T-cell (primary cell): ENCODE measurements at regions of chr10 and their contacts with region 1.

Region 1: DNA sequence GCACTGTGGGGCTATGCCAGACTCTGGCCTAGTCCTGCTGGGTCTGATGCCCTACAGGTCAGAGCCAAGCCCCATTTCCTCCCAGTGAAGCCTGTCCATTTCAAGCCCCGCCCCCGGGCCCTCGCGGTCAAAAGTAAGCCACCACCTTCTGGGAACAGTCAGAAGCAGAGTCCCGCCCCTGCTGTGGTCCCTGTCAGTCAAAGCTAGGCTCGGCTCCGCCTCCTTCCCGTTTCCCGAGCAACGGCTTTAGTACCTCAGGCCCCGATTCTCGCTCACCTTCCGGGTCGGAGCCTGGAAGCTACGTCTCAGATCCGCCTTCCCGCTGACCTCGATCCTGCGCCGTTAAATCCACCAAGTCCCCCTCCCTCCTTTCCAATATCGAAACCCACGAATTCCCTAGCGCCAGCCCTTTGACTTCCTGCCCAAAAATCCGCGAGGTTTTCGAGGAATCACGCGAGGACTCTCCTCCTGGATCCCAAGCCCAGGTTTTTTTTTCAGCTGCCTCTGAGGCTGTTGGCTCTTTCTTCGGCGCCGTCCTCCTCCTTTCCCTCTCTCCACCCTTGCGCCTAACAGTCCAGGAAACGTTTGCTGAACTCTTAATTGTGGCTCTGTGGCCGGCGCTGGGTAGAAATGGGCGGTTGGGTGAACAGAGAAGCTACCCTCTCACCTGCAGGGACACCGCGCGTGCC is 11.8 kb downstream of the SFXN3 start:
- DNase-seq: peak; percentile 44 to 85 (median 68)
- ATAC-seq: peak; percentile 80 to 91 (median 86)
- H3K4me3 ChIP-seq: peak overlapping the region; percentile 59 to 83
- H3K4me3 Mint-ChIP-seq: peak overlapping the region; percentile 93 to 94 (median 94)
- H3K27ac ChIP-seq: peak overlapping the region; percentile 36
- H3K27ac Mint-ChIP-seq: peak overlapping the region; percentile 90 to 94
- H3K4me1 ChIP-seq: peaks cover 5 to 22% of the 10 kb centered on the region in 2 experiments
- H3K4me1 Mint-ChIP-seq: peaks cover 23 to 31% (median 26%) of the 10 kb centered on the region in 3 donors
- H3K27me3 ChIP-seq: peaks cover 13 to 22% of the 10 kb centered on the region in 2 experiments
- H3K27me3 Mint-ChIP-seq: peaks cover 17 to 20% of the 10 kb centered on the region in 2 donors

Region 2: GRCh38 chr10:100986952-100987750 is 55.7 kb before region 1 on chr10 and contains the starts of genes MRPL43 and TWNK:
- CTCF ChIA-PET with region 1: interaction called in 1 of 2 experiments, 10 read pairs
- POLR2A ChIA-PET with region 1: no interaction called
- DNase-seq: peak; percentile 67 to 90 (median 82)
- ATAC-seq: peak; percentile 94 to 97 (median 96)
- H3K4me3 ChIP-seq: peak within 1 kb of the TSS; percentile 91 to 92
- H3K4me3 Mint-ChIP-seq: peak within 1 kb of the TSS; percentile 89 to 99 (median 93)
- H3K27ac ChIP-seq: peak within 1 kb of the TSS; percentile 20
- H3K27ac Mint-ChIP-seq: peak within 1 kb of the TSS; percentile 86 to 96
- H3K4me1 ChIP-seq: peaks cover 7 to 39% of the 10 kb centered on the region in 2 experiments
- H3K4me1 Mint-ChIP-seq: peaks cover 38 to 50% (median 44%) of the 10 kb centered on the region in 3 donors
- H3K27me3 ChIP-seq: no peaks in the 10 kb centered on the region
- H3K27me3 Mint-ChIP-seq: no peaks in the 10 kb centered on the region
- total RNA-seq, gene MRPL43: 36.2 to 67.6 (median 60.4) TPM
- total RNA-seq, gene TWNK: 5.3 to 20.2 (median 16.9) TPM

Region 3: DNA sequence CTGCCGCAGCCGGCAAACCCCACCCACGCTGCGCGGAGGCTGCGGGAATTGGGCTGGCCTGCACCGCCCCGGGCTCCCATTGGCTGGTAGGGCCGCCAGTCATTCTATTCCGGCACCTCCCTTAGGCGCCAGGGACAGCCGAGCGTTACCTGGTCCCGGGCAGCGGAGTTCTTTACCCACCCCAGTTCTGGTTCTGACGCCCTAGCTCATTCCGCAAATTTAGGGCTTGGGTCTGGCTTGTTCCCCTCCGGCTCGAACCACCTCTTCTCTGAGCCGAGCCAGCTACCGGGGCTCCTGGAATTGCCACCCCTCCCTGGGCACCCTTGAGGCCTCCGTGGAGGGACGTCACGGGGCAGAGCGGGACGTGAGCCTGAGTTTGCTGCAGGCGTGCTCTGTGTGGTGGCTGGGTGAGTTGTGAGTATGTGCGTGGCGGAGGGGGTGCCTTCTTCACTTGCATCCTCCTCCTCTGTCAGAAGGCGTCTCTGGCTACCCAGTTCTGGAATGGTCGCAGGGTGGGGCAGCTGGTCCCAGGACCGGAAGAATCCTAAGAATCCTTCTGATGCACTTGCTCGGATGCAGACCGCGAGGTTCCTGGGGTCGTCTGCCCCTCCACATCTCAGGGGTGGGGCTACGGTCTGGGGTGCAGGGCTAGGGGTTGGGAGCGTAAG is 11.5 kb before region 1 on chr10 and contains the starts of genes PDZD7 and SFXN3:
- CTCF ChIA-PET with region 1: interaction called, 14 to 15 read pairs
- POLR2A ChIA-PET with region 1: interaction called, 4 to 9 read pairs
- DNase-seq: peak; percentile 88 to 98 (median 96)
- ATAC-seq: peak; percentile 83 to 91 (median 88)
- H3K4me3 ChIP-seq: peak within 1 kb of the TSS; percentile 73 to 85
- H3K4me3 Mint-ChIP-seq: peak within 1 kb of the TSS; percentile 84 to 92 (median 91)
- H3K27ac ChIP-seq: peak within 1 kb of the TSS; percentile 93
- H3K27ac Mint-ChIP-seq: peak within 1 kb of the TSS; percentile 94 to 96
- H3K4me1 ChIP-seq: peaks cover 7 to 27% of the 10 kb centered on the region in 2 experiments
- H3K4me1 Mint-ChIP-seq: peaks cover 17 to 26% (median 20%) of the 10 kb centered on the region in 3 donors
- H3K27me3 ChIP-seq: peaks cover 0 to 11% of the 10 kb centered on the region in 2 experiments
- H3K27me3 Mint-ChIP-seq: no peaks in the 10 kb centered on the region
- total RNA-seq, gene PDZD7: 1.7 to 2.7 (median 2.3) TPM
- total RNA-seq, gene SFXN3: 45.2 to 113 (median 91.0) TPM

Region 4: GRCh38 chr10:101060036-101060950 is 17.5 kb after region 1 on chr10:
- CTCF ChIA-PET with region 1: interaction called, 6 to 12 read pairs
- POLR2A ChIA-PET with region 1: interaction called, 4 to 13 read pairs
- DNase-seq: peak; percentile 67 to 94 (median 86)
- ATAC-seq: peak; percentile 75 to 81 (median 76)
- H3K4me3 ChIP-seq: peak overlapping the region; percentile 99 to 100
- H3K4me3 Mint-ChIP-seq: peak overlapping the region; percentile 86 to 93 (median 87)
- H3K27ac ChIP-seq: peak overlapping the region; percentile 90
- H3K27ac Mint-ChIP-seq: peak overlapping the region; percentile 91 to 98
- H3K4me1 ChIP-seq: peaks cover 11 to 34% of the 10 kb centered on the region in 2 experiments
- H3K4me1 Mint-ChIP-seq: peaks cover 22 to 35% (median 23%) of the 10 kb centered on the region in 3 donors
- H3K27me3 ChIP-seq: peaks cover 6 to 32% of the 10 kb centered on the region in 2 experiments
- H3K27me3 Mint-ChIP-seq: peaks cover 17 to 19% of the 10 kb centered on the region in 2 donors

Region 5: DNA sequence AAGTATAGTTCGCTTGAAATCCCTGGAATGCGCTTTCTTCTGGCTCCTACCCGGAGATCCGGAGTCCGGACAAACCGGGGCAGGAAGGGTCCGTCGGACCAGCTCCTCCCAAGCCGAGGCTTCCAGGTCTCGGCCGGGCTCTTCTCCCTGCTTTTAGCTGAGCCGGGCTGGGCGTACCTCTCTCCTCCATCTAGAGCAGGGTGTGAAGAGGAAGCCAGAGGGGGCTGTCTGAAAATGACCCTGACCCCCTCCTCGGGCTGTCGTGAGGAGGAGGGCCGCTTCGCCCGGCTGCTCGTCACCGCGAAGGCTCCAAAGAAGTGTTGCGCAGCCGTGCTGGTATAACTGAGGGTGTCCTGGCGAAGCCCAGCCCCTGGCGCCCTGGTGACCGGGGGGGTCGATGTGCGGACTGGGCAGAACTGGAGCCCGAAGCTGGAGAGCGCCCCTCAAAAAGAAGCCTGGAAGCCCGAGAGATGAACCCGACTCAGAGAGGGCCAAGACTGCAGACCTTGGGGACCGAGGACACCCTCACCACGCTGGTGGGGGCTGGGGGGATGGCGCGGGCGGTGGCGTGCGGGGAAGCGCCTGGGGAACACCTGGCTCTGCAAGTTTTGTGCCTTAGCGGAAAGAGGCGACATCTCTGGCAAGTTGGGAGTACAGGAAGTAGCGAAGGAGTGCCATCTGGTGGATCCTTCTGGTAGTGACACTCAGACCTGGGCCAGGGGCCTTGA is 24.7 kb after region 1 on chr10:
- CTCF ChIA-PET with region 1: interaction called, 5 to 16 read pairs
- POLR2A ChIA-PET with region 1: no interaction called
- DNase-seq: peak; percentile 31 to 87 (median 59)
- ATAC-seq: peak; percentile 74 to 81 (median 77)
- H3K4me3 ChIP-seq: peak overlapping the region; percentile 57 to 61
- H3K4me3 Mint-ChIP-seq: peak overlapping the region; percentile 82 to 85 (median 84)
- H3K27ac ChIP-seq: no peak overlapping the region
- H3K27ac Mint-ChIP-seq: no peak overlapping the region
- H3K4me1 ChIP-seq: peaks cover 6 to 36% of the 10 kb centered on the region in 2 experiments
- H3K4me1 Mint-ChIP-seq: peaks cover 7 to 37% (median 22%) of the 10 kb centered on the region in 3 donors
- H3K27me3 ChIP-seq: peaks cover 8 to 61% of the 10 kb centered on the region in 2 experiments
- H3K27me3 Mint-ChIP-seq: peaks cover 37 to 49% of the 10 kb centered on the region in 2 donors

Region 6: DNA sequence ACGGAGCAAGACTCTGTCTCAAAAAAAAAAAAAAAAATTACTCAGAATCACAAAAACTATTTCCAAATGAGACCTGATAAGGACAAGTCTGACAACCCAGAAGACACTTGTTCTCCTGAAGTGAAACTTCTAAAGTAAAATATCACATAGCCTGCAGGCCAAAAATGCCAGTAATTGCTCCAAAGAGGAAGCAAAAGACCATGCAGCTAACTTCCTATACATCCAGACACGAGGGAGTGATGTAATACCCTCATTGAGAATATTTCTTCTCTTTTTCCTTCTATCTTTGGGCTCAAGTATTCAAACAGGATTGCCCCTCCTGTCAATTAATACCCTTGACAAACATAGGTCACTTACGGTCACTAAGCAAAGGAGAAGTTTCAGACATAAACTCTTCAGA is 982.0 kb after region 1 on chr10:
- CTCF ChIA-PET with region 1: no interaction called
- POLR2A ChIA-PET with region 1: no interaction called
- DNase-seq: no peak
- ATAC-seq: no peak
- H3K4me3 ChIP-seq: no peak overlapping the region
- H3K4me3 Mint-ChIP-seq: no peak overlapping the region
- H3K27ac ChIP-seq: no peak overlapping the region
- H3K27ac Mint-ChIP-seq: no peak overlapping the region
- H3K4me1 ChIP-seq: peaks cover 0 to 4% of the 10 kb centered on the region in 2 experiments
- H3K4me1 Mint-ChIP-seq: peaks cover 0 to 1% (median 1%) of the 10 kb centered on the region in 3 donors
- H3K27me3 ChIP-seq: no peaks in the 10 kb centered on the region
- H3K27me3 Mint-ChIP-seq: no peaks in the 10 kb centered on the region

Region 7: GRCh38 chr10:102461187-102462054 is 1418.6 kb after region 1 on chr10:
- CTCF ChIA-PET with region 1: interaction called in 1 of 2 experiments, 10 read pairs
- POLR2A ChIA-PET with region 1: no interaction called
- DNase-seq: peak; percentile 83 to 96 (median 90)
- ATAC-seq: peak; percentile 99 to 100 (median 100)
- H3K4me3 ChIP-seq: peak overlapping the region; percentile 55 to 75
- H3K4me3 Mint-ChIP-seq: peak overlapping the region; percentile 85 to 95 (median 86)
- H3K27ac ChIP-seq: peak overlapping the region; percentile 48
- H3K27ac Mint-ChIP-seq: peak overlapping the region; percentile 64 to 80
- H3K4me1 ChIP-seq: peaks cover 5 to 23% of the 10 kb centered on the region in 2 experiments
- H3K4me1 Mint-ChIP-seq: peaks cover 21 to 32% (median 26%) of the 10 kb centered on the region in 3 donors
- H3K27me3 ChIP-seq: no peaks in the 10 kb centered on the region
- H3K27me3 Mint-ChIP-seq: no peaks in the 10 kb centered on the region